Mammary epithelial cell (primary cell): ENCODE measurements at regions of chr10 and their contacts with region 1.

Region 1: GRCh38 chr10:115706026-115706781 is 566.8 kb downstream of the GFRA1 start:
- DNase-seq: peak; percentile 1
- H3K4me3 ChIP-seq: no peak overlapping the region
- H3K27ac ChIP-seq: no peak overlapping the region
- H3K4me1 ChIP-seq: no peaks in the 10 kb centered on the region
- H3K27me3 ChIP-seq: no peaks in the 10 kb centered on the region
- CTCF ChIP-seq: peak; percentile 50 to 53

Region 2: DNA sequence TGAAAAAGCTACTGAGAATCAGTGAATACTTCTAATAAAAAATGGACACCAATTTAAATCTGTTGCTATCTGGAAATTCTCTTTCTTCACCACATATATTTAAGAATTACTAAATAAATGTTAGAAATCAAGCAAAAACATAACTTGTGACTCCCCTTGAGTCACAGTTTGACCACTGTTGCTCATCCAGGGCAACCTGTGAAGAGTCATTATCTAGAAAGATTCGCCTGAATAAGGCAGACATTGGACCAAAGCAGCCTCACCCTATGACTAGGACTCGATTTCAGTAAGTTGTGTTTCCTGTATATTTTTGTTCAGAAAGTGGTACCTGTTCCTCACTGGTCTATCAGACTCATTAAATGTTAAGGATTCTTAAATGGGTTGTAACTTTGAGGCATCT is 40.7 kb before region 1 on chr10:
- CTCF ChIA-PET with region 1: no interaction called
- dilution Hi-C with region 1: loop called (anchors 5 kb)
- in situ Hi-C with region 1: no loop called
- intact Hi-C with region 1: no loop called
- DNase-seq: no peak
- H3K4me3 ChIP-seq: no peak overlapping the region
- H3K27ac ChIP-seq: no peak overlapping the region
- H3K4me1 ChIP-seq: no peaks in the 10 kb centered on the region
- H3K27me3 ChIP-seq: no peaks in the 10 kb centered on the region
- CTCF ChIP-seq: no peak

Region 3: GRCh38 chr10:115801992-115802391 is 95.8 kb after region 1 on chr10:
- CTCF ChIA-PET with region 1: no interaction called
- dilution Hi-C with region 1: no loop called
- in situ Hi-C with region 1: no loop called
- intact Hi-C with region 1: loop called (anchors 1 kb)
- DNase-seq: no peak
- H3K4me3 ChIP-seq: no peak overlapping the region
- H3K27ac ChIP-seq: no peak overlapping the region
- H3K4me1 ChIP-seq: no peaks in the 10 kb centered on the region
- H3K27me3 ChIP-seq: no peaks in the 10 kb centered on the region
- CTCF ChIP-seq: no peak

Region 4: GRCh38 chr10:115936926-115937767 is 230.9 kb after region 1 on chr10:
- CTCF ChIA-PET with region 1: no interaction called
- dilution Hi-C with region 1: no loop called
- in situ Hi-C with region 1: no loop called
- intact Hi-C with region 1: no loop called
- DNase-seq: peak; percentile 36
- H3K4me3 ChIP-seq: no peak overlapping the region
- H3K27ac ChIP-seq: no peak overlapping the region
- H3K4me1 ChIP-seq: no peaks in the 10 kb centered on the region
- H3K27me3 ChIP-seq: no peaks in the 10 kb centered on the region
- CTCF ChIP-seq: no peak

Region 5: DNA sequence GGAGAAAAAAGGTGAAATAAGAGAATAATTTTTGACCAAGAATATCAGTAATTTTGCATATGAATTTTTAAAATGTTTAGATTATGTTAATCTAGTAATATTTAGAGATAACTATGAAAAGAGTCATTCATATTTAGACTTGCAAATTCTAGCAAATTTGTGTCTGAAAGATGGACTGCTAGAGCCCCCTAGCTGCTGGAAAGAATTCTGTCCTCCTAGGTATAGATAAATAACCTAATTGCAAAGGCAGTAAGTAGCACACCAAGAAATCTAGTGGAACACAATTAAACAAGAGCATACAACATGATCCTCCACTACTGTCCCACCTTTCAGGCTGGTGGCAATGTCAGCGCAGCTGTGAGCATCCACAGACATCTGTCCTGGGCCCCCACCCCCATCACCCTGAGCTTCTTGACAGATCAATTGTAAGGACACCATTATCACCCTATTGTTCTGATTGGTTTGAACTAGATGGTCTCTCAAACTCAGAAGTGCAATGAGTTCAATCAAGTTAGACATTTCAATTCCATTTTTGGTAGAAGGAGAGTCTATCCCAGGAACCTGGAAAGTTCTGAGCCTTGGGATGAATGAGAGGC is 581.8 kb after region 1 on chr10:
- CTCF ChIA-PET with region 1: no interaction called
- dilution Hi-C with region 1: no loop called
- in situ Hi-C with region 1: loop called in 1 of 2 experiments (anchors 25 kb)
- intact Hi-C with region 1: loop called (anchors 2 kb)
- DNase-seq: no peak
- H3K4me3 ChIP-seq: no peak overlapping the region
- H3K27ac ChIP-seq: no peak overlapping the region
- H3K4me1 ChIP-seq: no peaks in the 10 kb centered on the region
- H3K27me3 ChIP-seq: no peaks in the 10 kb centered on the region
- CTCF ChIP-seq: peak; percentile 70 to 72